ENCODE measurements at regions of chrX and their contacts with region 1.

Region 1: GRCh38 chrX:30889147-30890140 is at the start of gene TAB3:
- DNase-seq: peak; percentile 86
- ATAC-seq: peak; percentile 91
- H3K4me3 Mint-ChIP-seq: peak within 1 kb of the TSS; percentile 91
- H3K27ac Mint-ChIP-seq: peak within 1 kb of the TSS; percentile 95
- H3K4me1 Mint-ChIP-seq: peaks cover 10% of the 10 kb centered on the region
- H3K27me3 Mint-ChIP-seq: no peaks in the 10 kb centered on the region
- total RNA-seq, gene TAB3: 17.3 to 20.7 TPM

Region 2: GRCh38 chrX:30577362-30577991 is 312.0 kb before region 1 on chrX and contains the start of gene TASL:
- POLR2A ChIA-PET with region 1: interaction called, 10 read pairs
- DNase-seq: no peak
- ATAC-seq: peak; percentile 97
- H3K4me3 Mint-ChIP-seq: peak within 1 kb of the TSS; percentile 94
- H3K27ac Mint-ChIP-seq: peak within 1 kb of the TSS; percentile 99
- H3K4me1 Mint-ChIP-seq: peaks cover 15% of the 10 kb centered on the region
- H3K27me3 Mint-ChIP-seq: no peaks in the 10 kb centered on the region
- total RNA-seq, gene TASL: 2.6 to 3.1 TPM

Region 3: DNA sequence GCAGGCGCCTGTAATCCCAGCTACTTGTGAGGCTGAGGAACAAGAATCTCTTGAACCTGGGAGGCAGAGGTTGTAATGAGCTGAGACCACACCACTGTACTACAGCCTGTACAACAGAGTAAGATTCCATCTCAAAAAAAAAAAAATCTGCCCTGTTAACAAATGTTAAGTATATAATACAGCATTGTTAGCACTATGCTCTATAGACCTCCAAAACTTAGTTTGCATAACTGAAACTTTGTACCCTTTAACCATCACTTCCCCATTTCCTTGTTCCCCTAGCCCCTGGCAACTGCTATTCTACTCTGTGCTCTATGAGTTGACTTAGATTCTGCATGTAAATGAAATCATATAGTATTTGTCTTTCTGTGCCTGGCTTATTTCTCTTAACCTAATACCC is 77.1 kb before region 1 on chrX:
- POLR2A ChIA-PET with region 1: no interaction called
- DNase-seq: no peak
- ATAC-seq: no peak
- H3K4me3 Mint-ChIP-seq: no peak overlapping the region
- H3K27ac Mint-ChIP-seq: no peak overlapping the region
- H3K4me1 Mint-ChIP-seq: no peaks in the 10 kb centered on the region
- H3K27me3 Mint-ChIP-seq: no peaks in the 10 kb centered on the region

Region 4: GRCh38 chrX:30920263-30920662 is 30.8 kb after region 1 on chrX:
- POLR2A ChIA-PET with region 1: no interaction called
- DNase-seq: no peak
- ATAC-seq: no peak
- H3K4me3 Mint-ChIP-seq: no peak overlapping the region
- H3K27ac Mint-ChIP-seq: no peak overlapping the region
- H3K4me1 Mint-ChIP-seq: no peaks in the 10 kb centered on the region
- H3K27me3 Mint-ChIP-seq: peaks cover 5% of the 10 kb centered on the region

Region 5: GRCh38 chrX:30943984-30944780 is 54.7 kb after region 1 on chrX:
- POLR2A ChIA-PET with region 1: no interaction called
- DNase-seq: no peak
- ATAC-seq: no peak
- H3K4me3 Mint-ChIP-seq: no peak overlapping the region
- H3K27ac Mint-ChIP-seq: no peak overlapping the region
- H3K4me1 Mint-ChIP-seq: no peaks in the 10 kb centered on the region
- H3K27me3 Mint-ChIP-seq: no peaks in the 10 kb centered on the region